Tibial artery (tissue), 4 donors: ENCODE measurements at regions of chrX and their contacts with region 1.

Region 1: GRCh38 chrX:120274958-120275357 is 24.3 kb downstream of the ZBTB33 start:
- DNase-seq: no peak
- H3K4me3 ChIP-seq: no peak overlapping the region
- H3K27ac ChIP-seq: no peak overlapping the region
- H3K4me1 ChIP-seq: no peaks in the 10 kb centered on the region
- H3K27me3 ChIP-seq: no peaks in the 10 kb centered on the region
- CTCF ChIP-seq: no peak

Region 2: GRCh38 chrX:120332394-120332793 is 57.4 kb after region 1 on chrX:
- intact Hi-C with region 1: loop called (anchors 2 kb)
- DNase-seq: no peak
- H3K4me3 ChIP-seq: no peak overlapping the region
- H3K27ac ChIP-seq: no peak overlapping the region
- H3K4me1 ChIP-seq: no peaks in the 10 kb centered on the region
- H3K27me3 ChIP-seq: no peaks in the 10 kb centered on the region
- CTCF ChIP-seq: no peak

Region 3: DNA sequence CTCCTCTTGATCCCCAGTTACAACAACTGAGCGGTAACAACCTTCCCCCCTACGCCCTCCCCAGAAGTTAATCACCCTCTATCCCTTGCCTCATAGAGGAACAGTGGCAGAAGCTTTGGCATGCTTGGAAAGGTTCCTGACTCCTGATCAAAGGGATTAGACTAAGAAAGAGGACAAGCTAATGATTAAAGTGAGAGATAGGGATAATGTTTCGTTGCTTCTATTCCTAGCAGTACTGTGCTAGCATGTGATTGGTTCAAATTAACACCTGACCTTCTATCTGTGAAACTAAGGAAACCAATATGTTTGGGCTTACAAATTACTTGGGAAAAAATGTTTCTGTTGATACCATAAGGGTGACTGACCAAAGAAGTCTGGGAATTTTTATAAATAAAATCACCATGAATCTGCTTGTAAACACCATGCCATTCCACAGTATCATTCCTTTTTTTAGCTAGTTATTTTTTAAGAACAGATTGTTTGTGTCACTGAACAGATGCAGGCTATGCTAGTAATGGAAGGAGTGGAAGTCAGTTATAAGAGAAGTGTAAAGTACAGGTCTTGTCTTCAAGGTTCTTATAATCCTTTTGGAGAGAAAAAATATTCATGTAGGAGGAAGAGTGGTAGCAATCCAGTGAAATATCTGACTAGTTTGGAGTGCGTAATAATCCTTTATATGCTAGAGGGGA is 75.6 kb after region 1 on chrX:
- intact Hi-C with region 1: no loop called
- DNase-seq: no peak
- H3K4me3 ChIP-seq: no peak overlapping the region
- H3K27ac ChIP-seq: no peak overlapping the region
- H3K4me1 ChIP-seq: no peaks in the 10 kb centered on the region
- H3K27me3 ChIP-seq: no peaks in the 10 kb centered on the region
- CTCF ChIP-seq: no peak